A549 (cell line): ENCODE measurements at regions of chr1 and their contacts with region 1.

Region 1: DNA sequence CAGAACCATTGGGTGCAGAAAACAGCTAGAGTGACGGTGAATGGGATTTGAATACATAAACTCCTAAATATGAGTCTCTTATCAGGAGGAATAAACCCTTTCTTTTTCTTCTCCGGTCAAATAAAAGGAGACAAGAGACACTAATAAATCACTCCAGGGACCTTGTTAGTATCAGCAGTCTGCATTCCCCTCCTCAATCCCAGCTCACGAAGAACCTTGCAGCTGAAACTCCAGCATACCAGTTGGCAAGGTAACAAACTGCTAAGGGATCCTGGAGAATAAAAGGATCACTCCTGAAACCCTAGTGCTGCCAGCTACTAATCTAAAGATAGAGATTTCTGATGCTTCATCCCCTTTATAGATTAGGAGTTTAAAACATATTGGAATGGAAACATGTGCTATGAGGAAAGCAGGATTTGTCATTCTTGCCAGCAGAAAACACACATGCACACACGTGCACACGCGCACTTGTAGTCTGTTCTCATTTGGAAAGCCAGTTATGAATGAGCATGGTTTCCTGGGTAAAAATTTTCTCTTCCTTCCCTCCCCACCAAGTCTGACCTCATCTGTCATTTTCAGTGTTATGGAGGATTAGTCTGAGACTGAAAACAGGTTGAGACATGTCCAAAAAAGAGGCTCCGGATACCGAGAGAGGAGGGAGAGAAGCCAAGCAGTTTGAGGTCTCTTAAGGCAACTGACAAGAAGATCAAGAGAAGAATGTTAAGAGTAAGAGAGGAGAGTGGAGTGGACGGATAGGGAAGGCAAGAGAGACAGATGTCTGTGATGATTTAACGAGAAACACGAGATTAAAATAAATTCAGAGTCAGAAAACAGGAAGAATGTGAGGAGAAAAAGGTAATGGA is 10.9 kb downstream of the IER5 start:
- DNase-seq: no peak
- ATAC-seq: no peak
- H3K4me3 ChIP-seq: no peak overlapping the region
- H3K27ac ChIP-seq: peak overlapping the region; percentile 66 to 98
- H3K4me1 ChIP-seq: peaks cover 86% of the 10 kb centered on the region
- CTCF ChIP-seq: no peak
- EP300 ChIP-seq: no peak
- POLR2A ChIP-seq: no peak
- RAD21 ChIP-seq: no peak

Region 2: DNA sequence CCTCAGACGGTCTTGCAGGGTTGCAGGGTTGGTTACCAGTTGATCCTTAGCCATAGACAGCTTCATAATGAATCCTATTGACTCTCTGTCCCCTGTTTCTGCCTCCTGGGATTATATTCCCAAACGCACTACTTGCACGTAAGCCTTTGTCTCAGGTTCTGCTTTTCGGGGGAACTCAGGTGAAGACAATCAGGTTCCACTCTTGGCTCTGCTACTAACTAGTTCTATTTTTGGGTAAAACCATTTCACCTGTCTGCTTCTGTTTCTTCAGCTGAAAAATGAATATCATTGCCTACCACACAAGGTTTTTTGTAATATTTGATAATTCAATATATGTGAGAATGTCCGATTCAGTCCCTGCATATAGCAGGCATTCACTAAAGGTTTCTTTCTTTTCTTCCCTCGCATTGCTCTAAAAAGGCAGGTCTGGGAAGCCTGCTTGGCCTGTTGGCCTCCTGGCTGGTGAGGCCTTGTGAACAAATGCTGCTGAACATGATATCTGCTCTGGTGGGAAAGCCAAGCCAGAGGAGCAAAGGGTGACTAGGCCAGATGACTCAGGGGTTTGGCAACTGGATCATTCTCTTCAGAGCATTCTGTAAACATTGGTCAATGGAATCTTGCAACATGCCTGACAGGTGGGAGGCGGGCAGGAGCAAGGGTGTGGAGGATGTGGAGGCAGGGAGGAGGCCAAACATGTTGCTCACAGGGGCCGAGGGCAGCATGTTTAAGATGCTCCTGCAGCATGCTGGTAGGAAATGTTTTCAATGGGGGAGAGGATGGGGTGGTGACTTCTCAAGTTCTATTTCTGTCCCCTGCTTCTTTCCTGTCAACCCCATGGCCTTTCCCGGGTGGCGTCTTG is 12.9 kb after region 1 on chr1:
- CTCF ChIA-PET with region 1: interaction called, 34 read pairs
- POLR2A ChIA-PET with region 1: interaction called, 5 read pairs
- DNase-seq: peak; percentile 97 to 99
- ATAC-seq: peak; percentile 85 to 91
- H3K4me3 ChIP-seq: peak overlapping the region; percentile 14; the same call in 1 of the 3 replicates
- H3K27ac ChIP-seq: peak overlapping the region; percentile 93 to 98
- H3K4me1 ChIP-seq: peaks cover 95% of the 10 kb centered on the region
- CTCF ChIP-seq: no peak
- EP300 ChIP-seq: peak; percentile 93; a peak in 4 of 5 replicates
- POLR2A ChIP-seq: no peak; the same call in 1 of the 2 replicates
- RAD21 ChIP-seq: peak; percentile 29 to 61